OCI-LY7 (cell line): ENCODE measurements at regions of chr4 and their contacts with region 1.

Region 1: DNA sequence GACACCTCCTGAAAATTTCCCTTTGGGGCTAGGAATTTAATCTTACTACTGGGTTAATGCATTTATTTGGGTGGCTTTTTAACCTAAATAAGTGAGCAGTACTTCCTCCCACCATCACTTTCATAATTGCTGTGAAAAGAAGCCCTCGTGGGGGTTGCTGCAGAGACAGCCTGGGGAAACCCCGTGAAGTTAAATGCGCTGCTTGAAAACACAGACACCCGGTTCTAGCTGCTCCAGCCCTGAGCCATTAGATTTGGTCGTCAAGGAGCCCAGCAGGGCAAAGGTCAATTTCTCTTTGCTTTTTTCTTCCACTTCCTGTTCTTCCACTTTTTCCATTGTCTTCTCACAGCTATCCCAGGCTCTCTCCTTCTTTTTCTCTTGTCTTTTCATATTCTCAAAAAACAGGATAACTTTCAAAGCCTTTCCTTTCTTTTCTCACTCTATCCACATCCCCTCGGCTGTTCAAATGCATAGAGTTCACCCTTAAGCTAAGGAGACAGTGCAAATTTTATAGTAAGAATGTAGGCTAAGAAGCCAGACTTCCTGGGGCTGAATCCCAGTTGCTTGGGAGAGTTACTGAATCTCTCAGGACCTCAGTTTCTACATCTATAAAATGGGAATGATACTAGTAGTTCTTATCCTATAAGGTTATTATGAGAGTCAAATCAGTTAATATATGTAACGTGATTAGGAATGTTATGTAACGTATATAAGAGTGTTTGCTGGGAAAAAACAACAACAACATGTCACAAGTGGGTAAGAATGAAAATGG is 91.5 kb upstream of the ZNF827 start:
- DNase-seq: peak; percentile 75
- H3K4me3 ChIP-seq: peak overlapping the region; percentile 41
- H3K27ac ChIP-seq: peak overlapping the region; percentile 48
- H3K4me1 ChIP-seq: peaks cover 53% of the 10 kb centered on the region
- CTCF ChIP-seq: no peak

Region 2: GRCh38 chr4:146049802-146050201 is 19.7 kb after region 1 on chr4:
- CTCF ChIA-PET with region 1: no interaction called
- POLR2A ChIA-PET with region 1: interaction called, 42 read pairs
- intact Hi-C with region 1: loop called (anchors 2 kb)
- DNase-seq: peak; percentile 95
- H3K4me3 ChIP-seq: peak overlapping the region; percentile 43
- H3K27ac ChIP-seq: peak overlapping the region; percentile 98
- H3K4me1 ChIP-seq: peaks cover 66% of the 10 kb centered on the region
- CTCF ChIP-seq: 0 out of 2 replicates have a peak, but pooled peaks have one; percentile 28

Region 3: DNA sequence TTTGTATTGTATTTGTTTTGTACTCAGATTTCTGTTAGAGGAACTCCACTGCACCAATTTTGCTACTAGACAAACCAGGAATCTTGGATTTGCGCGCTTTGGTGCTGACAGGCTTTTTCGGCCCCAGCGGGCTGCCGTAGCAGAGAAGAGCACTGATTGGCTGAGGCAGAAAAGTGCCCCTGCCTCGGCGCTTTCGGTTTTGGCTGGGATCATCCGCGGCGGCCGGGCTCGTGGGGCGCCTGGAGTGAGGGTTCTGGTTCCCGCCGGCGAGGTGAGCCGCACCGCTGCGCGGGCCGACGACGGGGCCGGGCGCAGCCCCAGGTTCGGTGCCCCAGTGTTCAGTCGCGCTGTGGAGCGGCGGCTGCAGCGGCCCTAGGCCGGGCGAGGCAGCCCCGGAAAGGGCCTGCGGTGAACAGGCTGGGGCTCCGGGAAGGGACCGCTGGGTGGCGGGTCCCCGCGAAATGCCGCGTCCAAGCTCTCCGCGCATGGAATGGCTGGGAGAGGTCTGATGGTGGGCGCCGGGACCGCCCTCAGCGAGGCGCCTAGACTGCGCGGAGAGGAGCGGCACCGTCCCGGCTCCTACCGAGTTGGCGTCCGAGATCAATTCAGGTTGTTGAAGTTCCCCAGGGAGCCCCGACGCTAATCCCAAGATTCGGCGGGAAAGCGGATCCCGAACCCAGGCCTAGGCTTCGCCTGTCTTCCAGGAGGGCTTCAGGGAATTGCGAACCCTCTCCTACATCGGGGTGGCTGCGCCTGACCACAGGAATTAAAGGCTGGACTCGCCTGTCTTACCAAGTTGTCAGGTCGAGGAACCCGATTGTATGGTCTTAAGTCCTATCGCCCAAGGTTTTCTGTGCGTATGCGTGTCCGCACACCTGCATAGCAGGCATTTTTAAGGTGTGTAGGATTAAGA is 145.7 kb after region 1 on chr4 and contains the start of gene LSM6:
- CTCF ChIA-PET with region 1: no interaction called
- POLR2A ChIA-PET with region 1: no interaction called
- intact Hi-C with region 1: loop called (anchors 5 kb)
- DNase-seq: peak; percentile 86
- H3K4me3 ChIP-seq: peak within 1 kb of the TSS; percentile 92
- H3K27ac ChIP-seq: peak within 1 kb of the TSS; percentile 56
- H3K4me1 ChIP-seq: peaks cover 46% of the 10 kb centered on the region
- CTCF ChIP-seq: 0 out of 2 replicates have a peak, but pooled peaks have one; percentile 28
- total RNA-seq, gene LSM6: 123 and 132 TPM in 2 replicates

Region 4: GRCh38 chr4:146211440-146211839 is 181.3 kb after region 1 on chr4:
- CTCF ChIA-PET with region 1: no interaction called
- POLR2A ChIA-PET with region 1: no interaction called
- intact Hi-C with region 1: no loop called
- DNase-seq: no peak
- H3K4me3 ChIP-seq: no peak overlapping the region
- H3K27ac ChIP-seq: no peak overlapping the region
- H3K4me1 ChIP-seq: no peaks in the 10 kb centered on the region
- CTCF ChIP-seq: no peak